B cell (primary cell): ENCODE measurements at regions of chr5 and their contacts with region 1.

Region 1: DNA sequence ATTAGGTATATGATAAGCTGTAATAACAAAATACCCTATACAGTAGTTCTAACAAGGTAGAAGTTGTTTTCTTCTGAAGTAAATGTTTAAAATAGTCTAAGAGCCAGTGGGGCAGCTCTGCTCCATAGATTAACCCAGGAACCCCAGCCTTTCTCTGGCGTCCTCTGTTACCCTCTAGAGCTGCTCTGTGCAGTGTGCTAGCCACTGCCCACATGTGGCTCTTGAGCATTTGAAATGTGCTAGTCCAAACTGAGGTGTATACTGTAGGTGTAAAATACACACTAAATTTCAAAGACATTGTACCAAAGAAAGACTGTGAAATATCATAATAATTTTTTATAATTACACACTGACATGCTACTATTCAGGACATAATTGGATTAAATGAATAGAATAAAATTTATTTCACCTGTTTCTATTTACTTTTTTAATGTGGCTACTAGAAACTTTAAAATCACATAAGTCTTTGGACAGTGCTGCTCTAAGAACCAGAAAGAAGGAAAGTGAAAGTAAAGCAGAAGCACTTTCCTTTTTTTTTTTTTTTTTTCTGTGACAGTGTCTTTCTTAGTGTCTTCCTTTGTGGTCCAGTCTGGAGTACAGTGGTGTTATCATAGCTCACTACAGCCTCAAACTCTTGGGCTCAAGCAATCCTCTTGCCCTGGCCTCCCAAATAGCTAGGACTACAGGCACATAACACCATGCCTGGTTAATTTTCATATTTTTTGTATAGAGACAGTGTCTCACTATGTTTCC is 39.3 kb downstream of the RAI14 start:
- DNase-seq: peak; percentile 8
- ATAC-seq: peak; percentile 56
- H3K4me3 ChIP-seq: no peak overlapping the region
- H3K4me3 Mint-ChIP-seq: no peak overlapping the region
- H3K27ac ChIP-seq: no peak overlapping the region
- H3K27ac Mint-ChIP-seq: no peak overlapping the region
- H3K4me1 ChIP-seq: peaks cover 0 to 2% of the 10 kb centered on the region in 2 donors
- H3K4me1 Mint-ChIP-seq: peaks cover 10% of the 10 kb centered on the region
- H3K27me3 ChIP-seq: no peaks in the 10 kb centered on the region
- H3K27me3 Mint-ChIP-seq: no peaks in the 10 kb centered on the region
- CTCF ChIP-seq: no peak

Region 2: DNA sequence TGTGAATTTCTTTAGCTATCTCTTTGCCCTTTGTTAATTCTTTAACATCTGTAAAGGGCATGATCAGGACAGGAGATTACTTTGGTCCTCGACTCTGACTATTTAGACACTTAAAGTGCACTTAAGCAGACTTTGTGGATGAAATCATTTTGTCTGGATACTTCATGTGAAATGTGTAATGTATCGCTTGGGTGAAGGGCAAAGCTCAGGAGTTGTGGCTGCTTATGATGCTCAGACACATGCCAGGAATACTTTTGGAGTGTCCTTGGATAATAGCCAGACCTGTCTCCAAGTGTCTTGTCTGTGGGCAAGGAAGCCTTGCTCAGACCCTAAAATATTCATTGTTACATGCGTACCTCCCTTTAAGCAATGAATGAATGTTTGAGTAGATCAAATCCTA is 48.4 kb after region 1 on chr5:
- CTCF ChIA-PET with region 1: no interaction called
- POLR2A ChIA-PET with region 1: no interaction called
- intact Hi-C with region 1: loop called (anchors 5 kb)
- DNase-seq: no peak
- ATAC-seq: no peak
- H3K4me3 ChIP-seq: no peak overlapping the region
- H3K4me3 Mint-ChIP-seq: no peak overlapping the region
- H3K27ac ChIP-seq: peak overlapping the region in 1 of 2 donors; percentile 78
- H3K27ac Mint-ChIP-seq: no peak overlapping the region
- H3K4me1 ChIP-seq: peaks cover 19 to 26% of the 10 kb centered on the region in 2 donors
- H3K4me1 Mint-ChIP-seq: peaks cover 47% of the 10 kb centered on the region
- H3K27me3 ChIP-seq: no peaks in the 10 kb centered on the region
- H3K27me3 Mint-ChIP-seq: no peaks in the 10 kb centered on the region
- CTCF ChIP-seq: no peak

Region 3: DNA sequence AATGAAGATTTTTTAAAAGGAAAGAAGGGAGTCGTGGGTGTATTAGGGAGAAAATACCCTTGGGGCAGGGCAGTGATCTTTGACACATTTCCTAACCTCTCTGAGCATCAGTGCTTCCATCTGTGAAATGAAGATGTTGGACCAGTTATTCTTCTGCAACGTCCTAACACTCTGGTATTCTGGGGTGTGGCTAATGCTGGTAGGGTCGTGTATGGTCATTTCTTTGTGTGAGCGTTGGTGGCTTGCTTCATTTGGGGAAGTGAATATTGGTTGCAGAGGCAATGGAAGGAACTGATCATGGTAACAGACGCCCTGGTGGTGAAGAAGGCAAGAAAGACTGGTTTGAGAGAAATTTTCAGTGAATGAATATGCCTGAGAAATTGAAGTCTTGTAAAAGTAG is 75.6 kb after region 1 on chr5:
- CTCF ChIA-PET with region 1: no interaction called
- POLR2A ChIA-PET with region 1: no interaction called
- intact Hi-C with region 1: no loop called
- DNase-seq: no peak
- ATAC-seq: peak; percentile 28
- H3K4me3 ChIP-seq: no peak overlapping the region
- H3K4me3 Mint-ChIP-seq: no peak overlapping the region
- H3K27ac ChIP-seq: no peak overlapping the region
- H3K27ac Mint-ChIP-seq: no peak overlapping the region
- H3K4me1 ChIP-seq: no peaks in the 10 kb centered on the region
- H3K4me1 Mint-ChIP-seq: peaks cover 7% of the 10 kb centered on the region
- H3K27me3 ChIP-seq: peaks cover 0 to 3% (median 0%) of the 10 kb centered on the region in 4 experiments
- H3K27me3 Mint-ChIP-seq: peaks cover 33% of the 10 kb centered on the region
- CTCF ChIP-seq: no peak